H1 (cell line): ENCODE measurements at regions of chr9 and their contacts with region 1.

Region 1: GRCh38 chr9:19517202-19517942 is 108.6 kb downstream of the ACER2 start:
- DNase-seq: peak; percentile 25 to 90
- H3K4me3 ChIP-seq: no peak overlapping the region
- H3K27ac ChIP-seq: no peak overlapping the region
- H3K4me1 ChIP-seq: no peaks in the 10 kb centered on the region; a peak in 1 of 7 replicates
- H3K27me3 ChIP-seq: peaks cover 0 to 1% (median 0%) of the 10 kb centered on the region in 4 experiments; a peak in 1 of 7 replicates
- CTCF ChIP-seq: peak; percentile 70 to 83 (median 80)
- EP300 ChIP-seq: no peak
- POLR2A ChIP-seq: no peak
- RAD21 ChIP-seq: peak; percentile 84 to 89

Region 2: DNA sequence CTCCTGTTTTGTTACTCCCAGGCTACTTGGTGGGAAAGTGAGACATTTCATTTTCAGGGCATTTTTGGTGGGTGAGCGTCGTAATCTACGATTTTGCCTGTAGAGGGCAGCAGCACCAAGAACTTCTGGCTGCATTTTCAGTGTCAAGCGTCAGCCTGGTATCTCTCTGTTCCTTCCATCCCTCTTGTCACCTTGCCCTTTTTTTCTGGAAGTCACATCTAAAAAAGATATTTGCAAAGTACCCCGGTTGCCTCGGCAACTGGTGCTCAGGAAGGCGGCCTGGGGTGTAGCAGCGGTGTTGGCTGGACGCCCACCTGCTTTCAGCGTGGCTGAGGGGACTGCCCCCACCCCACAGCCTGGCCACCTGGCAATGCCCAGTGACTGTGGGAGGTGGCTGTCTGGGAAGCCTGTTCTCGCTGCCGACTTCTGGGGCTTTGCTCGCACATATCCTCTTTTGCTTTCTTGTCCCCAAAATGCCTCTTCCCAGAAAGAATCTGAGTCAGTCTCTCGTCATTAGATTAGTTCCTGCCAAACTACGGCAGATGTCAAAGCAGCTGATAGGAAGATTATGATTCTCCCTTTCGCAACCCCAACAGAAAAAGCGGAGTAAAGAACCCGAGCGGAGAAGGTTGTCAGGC is 24.1 kb before region 1 on chr9:
- CTCF ChIA-PET with region 1: interaction called, 11 read pairs
- POLR2A ChIA-PET with region 1: no interaction called
- DNase-seq: peak; percentile 31 to 78
- H3K4me3 ChIP-seq: no peak overlapping the region
- H3K27ac ChIP-seq: no peak overlapping the region
- H3K4me1 ChIP-seq: no peaks in the 10 kb centered on the region
- H3K27me3 ChIP-seq: no peaks in the 10 kb centered on the region
- CTCF ChIP-seq: peak; percentile 54 to 85 (median 80)
- EP300 ChIP-seq: no peak
- POLR2A ChIP-seq: no peak
- RAD21 ChIP-seq: peak; percentile 89 to 90

Region 3: DNA sequence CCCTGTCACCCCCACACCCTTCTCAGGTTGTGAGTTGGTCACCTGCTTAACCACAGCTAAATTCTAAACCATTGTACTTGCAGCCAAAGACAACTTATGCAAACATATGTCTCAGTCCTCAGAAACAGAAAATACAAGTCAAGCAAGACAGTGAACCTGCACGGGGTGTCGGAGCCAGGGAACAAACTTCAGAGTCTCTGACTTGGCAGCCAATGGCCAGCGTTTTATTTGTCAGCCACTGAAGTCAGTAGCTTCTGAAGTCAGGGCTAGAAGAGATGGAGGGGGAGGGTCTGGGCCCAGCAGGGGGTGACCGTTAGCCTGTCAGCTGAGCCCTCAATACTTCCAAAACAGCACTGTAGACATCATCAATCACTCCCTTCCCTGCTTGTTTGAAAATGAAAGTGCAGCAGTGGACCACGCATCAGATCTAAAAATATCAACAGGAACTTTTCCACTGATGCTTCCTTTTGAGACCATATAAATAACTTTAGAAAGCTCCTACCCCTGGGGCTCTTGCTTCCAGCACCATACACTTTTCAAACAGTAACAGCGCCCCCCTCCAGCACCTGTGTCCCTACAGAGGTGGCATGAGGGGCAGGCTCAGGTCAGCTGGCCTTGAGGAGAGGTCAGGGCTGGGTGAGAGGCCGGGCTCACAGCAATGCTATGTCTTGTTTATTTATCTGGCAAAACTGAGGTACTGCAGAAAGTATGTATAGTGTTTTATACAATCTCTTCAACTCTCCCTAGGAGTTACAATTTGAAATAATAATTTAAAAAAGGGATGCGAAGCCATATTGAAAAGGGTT is 34.0 kb after region 1 on chr9:
- CTCF ChIA-PET with region 1: interaction called, 11 read pairs
- POLR2A ChIA-PET with region 1: no interaction called
- DNase-seq: peak in 1 of 2 experiments; percentile 51
- H3K4me3 ChIP-seq: no peak overlapping the region
- H3K27ac ChIP-seq: no peak overlapping the region
- H3K4me1 ChIP-seq: peaks cover 0 to 3% (median 1%) of the 10 kb centered on the region in 4 experiments; a peak in 4 of 7 replicates
- H3K27me3 ChIP-seq: no peaks in the 10 kb centered on the region
- CTCF ChIP-seq: peak; percentile 27 to 50 (median 36)
- EP300 ChIP-seq: no peak
- POLR2A ChIP-seq: no peak
- RAD21 ChIP-seq: peak; percentile 18 to 40; a peak in 3 of 4 replicates

Region 4: GRCh38 chr9:19583890-19584289 is 66.5 kb after region 1 on chr9:
- CTCF ChIA-PET with region 1: interaction called, 15 read pairs
- POLR2A ChIA-PET with region 1: no interaction called
- DNase-seq: no peak
- H3K4me3 ChIP-seq: no peak overlapping the region
- H3K27ac ChIP-seq: no peak overlapping the region
- H3K4me1 ChIP-seq: no peaks in the 10 kb centered on the region
- H3K27me3 ChIP-seq: no peaks in the 10 kb centered on the region
- CTCF ChIP-seq: peak in 1 of 3 experiments; percentile 43; a peak in 2 of 4 replicates
- EP300 ChIP-seq: no peak
- POLR2A ChIP-seq: no peak
- RAD21 ChIP-seq: peak; percentile 46 to 54; a peak in 3 of 4 replicates

Region 5: GRCh38 chr9:19840953-19841352 is 323.6 kb after region 1 on chr9:
- CTCF ChIA-PET with region 1: no interaction called
- POLR2A ChIA-PET with region 1: no interaction called
- DNase-seq: no peak
- H3K4me3 ChIP-seq: no peak overlapping the region
- H3K27ac ChIP-seq: no peak overlapping the region
- H3K4me1 ChIP-seq: no peaks in the 10 kb centered on the region
- H3K27me3 ChIP-seq: no peaks in the 10 kb centered on the region
- CTCF ChIP-seq: no peak
- EP300 ChIP-seq: no peak
- POLR2A ChIP-seq: no peak
- RAD21 ChIP-seq: no peak

Region 6: GRCh38 chr9:19925817-19926503 is 408.6 kb after region 1 on chr9:
- CTCF ChIA-PET with region 1: interaction called, 17 read pairs
- POLR2A ChIA-PET with region 1: no interaction called
- DNase-seq: peak; percentile 70 to 89
- H3K4me3 ChIP-seq: peak overlapping the region in 3 of 4 experiments; percentile 11 to 47 (median 17); a peak in 4 of 8 replicates
- H3K27ac ChIP-seq: no peak overlapping the region
- H3K4me1 ChIP-seq: peaks cover 0 to 8% (median 4%) of the 10 kb centered on the region in 4 experiments; a peak in 3 of 7 replicates
- H3K27me3 ChIP-seq: peaks cover 0 to 4% (median under 1%) of the 10 kb centered on the region in 4 experiments; a peak in 2 of 7 replicates
- CTCF ChIP-seq: peak; percentile 92 to 99 (median 92)
- EP300 ChIP-seq: no peak
- POLR2A ChIP-seq: no peak
- RAD21 ChIP-seq: peak; percentile 99